ENCODE measurements at regions of chr5 and their contacts with region 1.

Region 1: DNA sequence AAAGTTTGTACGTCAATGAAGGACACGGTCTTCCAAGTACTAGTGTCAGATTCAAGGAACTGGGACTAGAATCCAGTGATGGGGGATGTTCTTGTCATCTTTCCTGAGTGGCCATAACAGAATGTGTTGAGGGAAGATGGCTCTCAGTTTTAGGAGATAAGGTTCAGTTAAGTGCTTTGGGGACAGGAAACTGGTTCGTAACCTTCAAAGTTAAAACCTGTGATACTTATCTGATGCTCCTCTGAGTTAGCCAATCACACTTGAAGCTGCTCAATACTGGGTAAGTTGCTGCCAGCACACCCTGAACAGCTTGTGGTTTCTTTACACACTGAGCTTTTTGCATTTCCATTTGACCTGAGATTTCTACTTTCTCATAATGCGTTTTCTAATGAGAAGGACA is 64.4 kb downstream of the PIK3R1 start:
- DNase-seq: peak; percentile 65
- ATAC-seq: peak; percentile 93
- H3K4me3 Mint-ChIP-seq: peak overlapping the region; percentile 68
- H3K27ac Mint-ChIP-seq: peak overlapping the region; percentile 98
- H3K4me1 Mint-ChIP-seq: peaks cover 92% of the 10 kb centered on the region
- H3K27me3 Mint-ChIP-seq: no peaks in the 10 kb centered on the region
- CTCF ChIP-seq: no peak

Region 2: DNA sequence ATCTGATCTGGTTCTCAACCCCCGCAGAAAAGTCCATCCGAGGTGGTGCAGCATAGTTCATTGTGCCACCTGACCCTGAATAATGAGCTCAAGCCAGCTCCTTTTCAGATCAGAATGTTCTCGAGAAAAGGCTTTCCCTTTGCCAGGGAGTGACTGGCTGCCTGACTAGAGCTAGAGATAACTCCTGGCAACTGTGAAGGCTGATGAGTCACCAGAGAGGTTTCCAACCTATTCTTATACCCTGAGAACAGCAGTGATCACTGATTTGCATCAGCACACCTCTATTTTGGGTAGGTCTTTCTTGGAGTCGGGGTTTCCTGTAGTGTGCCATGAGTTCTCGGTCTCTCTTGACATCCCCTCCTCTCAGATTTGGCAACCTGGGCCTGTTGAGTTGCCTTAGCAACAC is 63.4 kb after region 1 on chr5:
- CTCF ChIA-PET with region 1: no interaction called
- POLR2A ChIA-PET with region 1: no interaction called
- intact Hi-C with region 1: no loop called
- DNase-seq: peak; percentile 42
- ATAC-seq: peak; percentile 88
- H3K4me3 Mint-ChIP-seq: no peak overlapping the region
- H3K27ac Mint-ChIP-seq: no peak overlapping the region
- H3K4me1 Mint-ChIP-seq: peaks cover 31% of the 10 kb centered on the region
- H3K27me3 Mint-ChIP-seq: no peaks in the 10 kb centered on the region
- CTCF ChIP-seq: no peak

Region 3: GRCh38 chr5:68962757-68963484 is 682.9 kb after region 1 on chr5:
- CTCF ChIA-PET with region 1: no interaction called
- POLR2A ChIA-PET with region 1: no interaction called
- intact Hi-C with region 1: loop called (anchors 5 kb)
- DNase-seq: peak; percentile 29
- ATAC-seq: no peak
- H3K4me3 Mint-ChIP-seq: no peak overlapping the region
- H3K27ac Mint-ChIP-seq: no peak overlapping the region
- H3K4me1 Mint-ChIP-seq: no peaks in the 10 kb centered on the region
- H3K27me3 Mint-ChIP-seq: no peaks in the 10 kb centered on the region
- CTCF ChIP-seq: peak; percentile 55